ENCODE measurements at regions of chr11 and their contacts with region 1.

Region 1: DNA sequence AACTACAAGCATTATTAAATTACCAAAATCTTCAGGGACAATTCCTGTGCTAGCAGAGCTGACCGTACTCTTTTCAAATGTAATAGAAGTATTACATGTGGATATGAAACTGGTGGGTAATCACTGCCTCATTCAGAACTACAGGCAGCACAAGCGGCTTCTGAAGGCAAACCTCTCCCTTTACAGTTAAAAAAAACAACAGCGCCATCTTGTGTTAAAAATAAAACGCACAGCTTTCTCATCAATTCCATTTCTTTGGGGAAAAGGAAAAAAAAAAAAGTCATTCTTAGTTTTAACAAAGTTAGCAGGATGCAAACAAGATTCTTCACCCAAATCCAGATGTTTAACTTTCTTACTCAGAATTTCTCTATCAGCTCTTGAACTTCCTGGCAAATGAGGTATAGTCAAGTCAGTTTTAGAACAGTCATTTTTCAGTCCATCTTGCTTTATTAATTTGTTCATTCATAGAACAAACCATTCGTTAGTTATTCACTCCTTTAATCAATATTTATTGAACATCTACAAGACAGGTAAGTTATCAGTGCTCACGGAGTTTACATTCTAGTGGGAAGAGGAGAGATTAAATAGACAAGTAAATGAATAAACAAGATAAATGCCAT is 331.8 kb upstream of the MPPED2 start:
- DNase-seq: no peak
- H3K4me3 ChIP-seq: no peak overlapping the region
- CTCF ChIP-seq: peak in 1 of 3 donors; percentile 30
- POLR2A ChIP-seq: no peak

Region 2: DNA sequence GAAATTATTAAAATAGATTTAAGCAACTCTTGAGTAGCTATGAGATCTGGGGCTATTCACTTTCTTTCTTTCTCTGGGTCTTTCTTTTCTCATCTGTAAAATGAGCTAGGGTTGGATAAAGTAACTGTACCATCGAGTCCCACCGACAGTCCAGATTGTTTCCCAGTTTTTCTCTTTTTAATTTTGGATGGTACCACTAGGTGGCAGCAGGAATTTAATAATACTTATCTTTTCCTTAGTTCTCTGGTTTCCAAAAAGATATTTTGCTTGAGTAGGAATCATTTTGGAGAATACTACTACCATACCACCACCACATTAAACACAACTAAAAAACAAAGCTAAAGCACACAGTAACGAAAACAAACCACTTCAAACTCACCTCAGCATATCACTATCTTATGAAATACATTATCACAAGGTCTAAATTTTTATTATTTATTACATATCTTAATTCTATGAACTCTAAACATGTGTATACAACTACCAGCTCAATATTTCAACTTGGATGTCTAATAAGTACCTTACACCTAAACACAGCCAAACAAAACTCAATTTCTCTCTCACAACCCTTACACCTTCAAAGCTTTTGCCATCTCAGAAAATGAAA is 1485.1 kb before region 1 on chr11:
- intact Hi-C with region 1: loop called (anchors 10 kb)
- DNase-seq: no peak
- H3K4me3 ChIP-seq: no peak overlapping the region
- CTCF ChIP-seq: no peak
- POLR2A ChIP-seq: no peak

Region 3: GRCh38 chr11:30346068-30346688 is 571.8 kb before region 1 on chr11:
- intact Hi-C with region 1: loop called (anchors 10 kb)
- DNase-seq: no peak
- H3K4me3 ChIP-seq: no peak overlapping the region
- CTCF ChIP-seq: no peak
- POLR2A ChIP-seq: no peak

Region 4: GRCh38 chr11:30545507-30545906 is 372.5 kb before region 1 on chr11:
- intact Hi-C with region 1: no loop called
- DNase-seq: no peak
- H3K4me3 ChIP-seq: no peak overlapping the region
- CTCF ChIP-seq: no peak
- POLR2A ChIP-seq: no peak

Region 5: DNA sequence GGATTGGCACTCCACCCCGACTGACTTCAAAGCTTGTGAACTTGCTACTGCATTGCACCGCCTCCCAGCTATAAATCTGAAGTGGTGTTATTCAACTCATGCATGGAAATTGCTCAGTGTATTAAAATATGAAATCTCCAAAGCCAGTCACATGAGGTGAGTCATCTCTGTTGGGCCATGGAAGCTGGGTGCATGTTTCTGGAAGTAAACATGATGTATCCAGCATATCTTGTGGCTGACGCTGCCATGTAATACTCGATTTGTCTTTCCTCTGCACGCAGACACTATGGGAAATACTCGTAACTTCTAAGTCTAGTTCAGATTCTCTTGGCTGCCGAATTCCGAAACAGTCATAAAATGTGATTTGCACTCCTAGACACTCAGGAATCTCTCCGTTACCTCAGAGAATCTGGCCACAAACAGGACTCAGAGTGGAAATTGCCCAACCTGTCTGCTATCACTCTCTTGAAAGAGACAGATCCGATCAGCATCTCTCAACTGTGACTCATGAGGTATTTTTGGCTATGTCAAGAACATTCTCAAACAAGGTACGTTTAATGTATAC is 176.8 kb before region 1 on chr11:
- intact Hi-C with region 1: no loop called
- DNase-seq: peak in 1 of 2 donors; percentile 17
- H3K4me3 ChIP-seq: no peak overlapping the region
- CTCF ChIP-seq: no peak
- POLR2A ChIP-seq: no peak

Measured in lower leg skin (tissue), 4 donors.